ENCODE measurements at regions of chr6 and their contacts with region 1.

Region 1: GRCh38 chr6:2988426-2989331 is 11.0 kb upstream of the NQO2 start:
- DNase-seq: peak; percentile 87
- ATAC-seq: peak; percentile 83
- H3K4me3 Mint-ChIP-seq: peak overlapping the region; percentile 93
- H3K27ac Mint-ChIP-seq: peak overlapping the region; percentile 99
- H3K4me1 Mint-ChIP-seq: peaks cover 21% of the 10 kb centered on the region
- H3K27me3 Mint-ChIP-seq: peaks cover under 1% of the 10 kb centered on the region
- CTCF ChIP-seq: no peak

Region 2: GRCh38 chr6:2738373-2738979 is 250.2 kb before region 1 on chr6:
- CTCF ChIA-PET with region 1: interaction called, 4 read pairs
- POLR2A ChIA-PET with region 1: interaction called, 4 read pairs
- intact Hi-C with region 1: loop called (anchors 1 kb)
- DNase-seq: no peak
- ATAC-seq: no peak
- H3K4me3 Mint-ChIP-seq: no peak overlapping the region
- H3K27ac Mint-ChIP-seq: no peak overlapping the region
- H3K4me1 Mint-ChIP-seq: peaks cover 10% of the 10 kb centered on the region
- H3K27me3 Mint-ChIP-seq: no peaks in the 10 kb centered on the region
- CTCF ChIP-seq: no peak

Region 3: DNA sequence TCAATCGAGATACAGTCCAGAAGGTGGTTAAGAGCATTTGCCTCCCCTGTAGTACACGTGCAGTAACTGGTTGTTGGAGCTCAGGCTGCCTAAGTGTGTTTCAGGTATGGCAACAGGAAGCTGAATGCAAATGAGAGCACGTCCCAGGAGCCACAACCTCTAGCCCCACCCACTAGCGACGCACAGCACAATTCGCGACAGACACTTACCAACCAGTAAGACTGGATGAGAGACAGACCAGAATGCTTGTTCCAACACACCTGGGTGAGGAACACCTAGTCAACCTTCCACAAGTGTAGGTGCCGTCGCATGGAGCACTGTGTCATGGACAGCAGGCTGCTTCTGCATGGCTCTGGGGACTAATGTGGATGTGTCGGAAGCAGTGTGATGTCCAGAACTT is 139.8 kb before region 1 on chr6:
- CTCF ChIA-PET with region 1: interaction called, 58 read pairs
- POLR2A ChIA-PET with region 1: interaction called, 77 read pairs
- intact Hi-C with region 1: loop called (anchors 1 kb)
- DNase-seq: no peak
- ATAC-seq: peak; percentile 65
- H3K4me3 Mint-ChIP-seq: peak overlapping the region; percentile 33
- H3K27ac Mint-ChIP-seq: peak overlapping the region; percentile 83
- H3K4me1 Mint-ChIP-seq: peaks cover 59% of the 10 kb centered on the region
- H3K27me3 Mint-ChIP-seq: no peaks in the 10 kb centered on the region
- CTCF ChIP-seq: no peak

Region 4: GRCh38 chr6:2900821-2901644 is 87.6 kb before region 1 on chr6:
- CTCF ChIA-PET with region 1: interaction called, 8 read pairs
- POLR2A ChIA-PET with region 1: interaction called, 25 read pairs
- intact Hi-C with region 1: no loop called
- DNase-seq: no peak
- ATAC-seq: no peak
- H3K4me3 Mint-ChIP-seq: peak overlapping the region; percentile 98
- H3K27ac Mint-ChIP-seq: peak overlapping the region; percentile 93
- H3K4me1 Mint-ChIP-seq: peaks cover 61% of the 10 kb centered on the region
- H3K27me3 Mint-ChIP-seq: no peaks in the 10 kb centered on the region
- CTCF ChIP-seq: no peak

Region 5: DNA sequence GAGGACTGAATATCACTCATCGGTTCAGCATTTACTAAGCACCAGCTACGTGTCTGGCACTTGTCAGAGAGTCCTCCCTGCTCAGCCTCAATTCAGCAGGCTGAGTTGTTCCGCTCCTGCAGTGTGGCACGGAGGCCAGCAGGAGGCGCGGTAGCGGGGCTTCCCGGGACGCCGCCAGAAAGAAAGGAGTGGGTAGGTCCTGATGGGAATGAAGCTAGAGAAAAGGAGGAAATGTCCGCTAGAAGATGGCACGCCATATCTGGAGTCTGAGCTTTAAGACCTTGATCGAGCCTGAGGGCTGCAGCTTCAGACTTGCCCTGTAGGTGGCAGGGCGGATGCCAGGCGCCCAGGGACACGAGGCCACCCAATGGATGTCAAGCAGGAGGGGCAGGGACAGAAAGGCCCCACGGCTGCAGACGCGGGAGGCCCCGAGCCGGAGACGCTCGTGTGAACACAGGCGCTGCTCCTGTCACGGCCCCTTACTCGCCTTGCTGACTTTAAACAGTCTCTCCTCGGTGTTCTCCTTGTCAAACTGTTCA is 36.1 kb before region 1 on chr6:
- CTCF ChIA-PET with region 1: interaction called, 41 read pairs
- POLR2A ChIA-PET with region 1: interaction called, 11 read pairs
- intact Hi-C with region 1: loop called (anchors 1 kb)
- DNase-seq: peak; percentile 41
- ATAC-seq: peak; percentile 95
- H3K4me3 Mint-ChIP-seq: peak overlapping the region; percentile 75
- H3K27ac Mint-ChIP-seq: peak overlapping the region; percentile 79
- H3K4me1 Mint-ChIP-seq: peaks cover 17% of the 10 kb centered on the region
- H3K27me3 Mint-ChIP-seq: no peaks in the 10 kb centered on the region
- CTCF ChIP-seq: no peak

Region 6: GRCh38 chr6:3052481-3053230 is 64.0 kb after region 1 on chr6:
- CTCF ChIA-PET with region 1: interaction called, 9 read pairs
- POLR2A ChIA-PET with region 1: interaction called, 16 read pairs
- intact Hi-C with region 1: no loop called
- DNase-seq: no peak
- ATAC-seq: no peak
- H3K4me3 Mint-ChIP-seq: peak overlapping the region; percentile 76
- H3K27ac Mint-ChIP-seq: no peak overlapping the region
- H3K4me1 Mint-ChIP-seq: peaks cover 14% of the 10 kb centered on the region
- H3K27me3 Mint-ChIP-seq: peaks cover 9% of the 10 kb centered on the region
- CTCF ChIP-seq: no peak

Region 7: GRCh38 chr6:4018172-4018905 is 1029.7 kb after region 1 on chr6:
- CTCF ChIA-PET with region 1: no interaction called
- POLR2A ChIA-PET with region 1: interaction called, 6 read pairs
- intact Hi-C with region 1: loop called (anchors 10 kb)
- DNase-seq: peak; percentile 92
- ATAC-seq: peak; percentile 68
- H3K4me3 Mint-ChIP-seq: peak overlapping the region; percentile 95
- H3K27ac Mint-ChIP-seq: peak overlapping the region; percentile 99
- H3K4me1 Mint-ChIP-seq: peaks cover 68% of the 10 kb centered on the region
- H3K27me3 Mint-ChIP-seq: no peaks in the 10 kb centered on the region
- CTCF ChIP-seq: no peak